Activated CD4-positive, alpha-beta memory T cell treated with anti-CD3 and anti-CD28 coated beads, Interleukin-2, amount 10 ng/mL, durations not matched to agents 7 days and 5 days (primary cell): ENCODE measurements at regions of chr5 and their contacts with region 1.

Region 1: DNA sequence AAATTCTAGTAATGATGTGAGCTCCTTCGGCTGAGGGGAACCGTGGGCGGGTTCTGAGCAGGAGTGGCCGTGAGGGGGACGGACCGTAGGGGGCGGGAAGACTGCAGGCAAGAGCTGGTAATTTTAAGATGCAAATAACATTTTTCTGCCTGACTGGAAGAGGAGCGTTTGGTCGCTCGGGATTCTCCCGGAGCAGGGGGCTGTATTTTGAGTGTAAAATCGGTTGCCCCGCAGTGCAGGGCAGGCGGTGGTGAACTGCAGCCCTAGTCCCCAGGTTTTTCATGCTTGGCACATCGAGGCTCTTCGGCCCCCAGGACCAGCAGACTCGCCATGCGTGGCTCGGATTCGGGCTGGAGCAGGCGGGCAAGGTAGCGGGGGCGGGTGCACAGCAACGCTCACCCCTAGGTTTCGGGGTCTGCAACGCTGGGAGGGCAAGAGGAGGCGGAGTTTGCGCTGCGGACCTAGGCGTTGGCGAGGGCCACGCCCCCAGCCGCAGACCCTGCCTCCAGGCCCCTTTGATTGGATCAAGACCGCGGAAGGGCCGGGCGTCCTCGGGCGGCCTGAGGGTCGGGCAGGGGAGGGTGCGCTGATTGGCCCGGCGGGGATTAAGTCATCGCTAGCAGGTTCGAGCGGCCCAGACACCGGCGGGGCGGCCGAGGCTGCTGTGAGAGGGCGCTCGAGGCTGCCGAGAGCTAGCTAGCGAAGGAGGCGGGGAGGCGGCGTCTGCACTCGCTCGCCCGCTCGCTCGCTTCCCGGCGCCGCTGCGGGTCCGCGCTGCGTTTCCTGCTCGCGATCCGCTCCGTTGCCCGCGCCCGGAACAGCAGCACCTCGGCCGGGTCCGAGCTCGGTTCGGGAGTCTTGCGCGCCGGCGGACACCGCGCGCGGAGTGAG is at the start of gene ARHGAP26:
- DNase-seq: peak; percentile 94
- H3K4me3 Mint-ChIP-seq: peak within 1 kb of the TSS; percentile 91
- H3K27ac Mint-ChIP-seq: peak within 1 kb of the TSS; percentile 72
- H3K4me1 Mint-ChIP-seq: peaks cover 33% of the 10 kb centered on the region
- H3K27me3 Mint-ChIP-seq: peaks cover 3% of the 10 kb centered on the region
- total RNA-seq, gene ARHGAP26: 14.8 to 17.1 TPM

Region 2: DNA sequence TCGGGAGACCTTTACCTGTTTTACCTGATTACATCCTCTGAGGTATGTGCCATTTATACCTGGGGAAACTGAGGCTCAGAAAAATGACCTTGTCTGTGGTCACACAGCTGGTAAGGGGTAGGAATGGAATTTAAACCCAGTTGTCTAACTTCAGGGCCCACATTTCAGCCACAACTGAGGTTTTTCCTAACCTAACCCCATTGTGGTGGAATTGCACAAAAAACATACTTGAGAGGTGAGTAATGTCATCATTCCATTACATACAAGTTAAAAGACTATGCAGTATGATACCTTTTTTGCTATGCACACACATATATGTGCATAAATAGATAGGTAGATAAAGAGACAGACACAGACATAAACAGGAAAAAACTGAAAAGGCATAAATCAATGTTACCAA is 98.2 kb before region 1 on chr5:
- CTCF ChIA-PET with region 1: no interaction called
- POLR2A ChIA-PET with region 1: no interaction called
- DNase-seq: no peak
- H3K4me3 Mint-ChIP-seq: no peak overlapping the region
- H3K27ac Mint-ChIP-seq: no peak overlapping the region
- H3K4me1 Mint-ChIP-seq: no peaks in the 10 kb centered on the region
- H3K27me3 Mint-ChIP-seq: peaks cover 3% of the 10 kb centered on the region

Region 3: GRCh38 chr5:142748568-142749249 is 21.3 kb before region 1 on chr5:
- CTCF ChIA-PET with region 1: interaction called, 38 read pairs
- POLR2A ChIA-PET with region 1: interaction called, 3 read pairs
- DNase-seq: peak; percentile 59
- H3K4me3 Mint-ChIP-seq: no peak overlapping the region
- H3K27ac Mint-ChIP-seq: no peak overlapping the region
- H3K4me1 Mint-ChIP-seq: peaks cover 14% of the 10 kb centered on the region
- H3K27me3 Mint-ChIP-seq: peaks cover 4% of the 10 kb centered on the region

Region 4: DNA sequence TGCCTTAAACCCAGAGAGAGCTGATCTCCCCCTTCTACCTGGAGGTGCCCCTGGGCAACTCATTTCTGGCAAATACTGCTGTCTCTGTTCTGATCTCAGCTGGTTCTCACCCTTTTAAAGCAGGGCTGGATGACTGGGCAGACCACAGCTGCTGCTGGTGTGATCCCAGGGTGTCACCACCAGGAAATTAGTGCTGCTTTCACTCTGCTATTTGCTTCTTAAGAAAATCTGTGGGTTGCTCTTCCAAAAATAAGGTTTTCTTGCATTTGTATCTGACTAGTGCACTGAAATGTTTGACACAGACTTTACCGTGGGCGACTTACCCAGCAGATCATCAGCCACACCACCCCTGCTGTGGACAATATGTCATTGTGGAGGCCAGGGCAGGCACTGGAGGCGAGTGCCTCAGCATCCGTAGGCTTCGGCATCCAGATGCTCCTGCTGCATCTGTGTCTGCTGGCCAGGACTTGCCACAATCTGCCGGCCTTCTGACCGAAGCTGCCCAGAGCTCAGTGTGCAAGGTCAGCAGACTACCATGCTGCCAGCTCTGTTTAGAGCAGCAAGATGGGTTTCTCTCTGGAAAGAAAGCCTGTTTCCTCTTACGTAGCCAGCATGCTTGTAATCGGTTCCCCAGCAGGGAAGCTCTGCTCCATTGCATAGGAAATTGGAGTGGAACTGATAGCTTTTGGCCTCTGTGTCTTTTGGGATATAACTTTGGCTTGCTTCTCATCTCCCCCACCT is 13.8 kb after region 1 on chr5:
- CTCF ChIA-PET with region 1: interaction called, 48 read pairs
- POLR2A ChIA-PET with region 1: interaction called, 27 read pairs
- DNase-seq: peak; percentile 74
- H3K4me3 Mint-ChIP-seq: peak overlapping the region; percentile 63
- H3K27ac Mint-ChIP-seq: peak overlapping the region; percentile 81
- H3K4me1 Mint-ChIP-seq: peaks cover 61% of the 10 kb centered on the region
- H3K27me3 Mint-ChIP-seq: no peaks in the 10 kb centered on the region

Region 5: GRCh38 chr5:142800776-142801494 is 30.9 kb after region 1 on chr5:
- CTCF ChIA-PET with region 1: interaction called, 9 read pairs
- POLR2A ChIA-PET with region 1: interaction called, 16 read pairs
- DNase-seq: peak; percentile 65
- H3K4me3 Mint-ChIP-seq: peak overlapping the region; percentile 48
- H3K27ac Mint-ChIP-seq: peak overlapping the region; percentile 77
- H3K4me1 Mint-ChIP-seq: peaks cover 60% of the 10 kb centered on the region
- H3K27me3 Mint-ChIP-seq: no peaks in the 10 kb centered on the region

Region 6: DNA sequence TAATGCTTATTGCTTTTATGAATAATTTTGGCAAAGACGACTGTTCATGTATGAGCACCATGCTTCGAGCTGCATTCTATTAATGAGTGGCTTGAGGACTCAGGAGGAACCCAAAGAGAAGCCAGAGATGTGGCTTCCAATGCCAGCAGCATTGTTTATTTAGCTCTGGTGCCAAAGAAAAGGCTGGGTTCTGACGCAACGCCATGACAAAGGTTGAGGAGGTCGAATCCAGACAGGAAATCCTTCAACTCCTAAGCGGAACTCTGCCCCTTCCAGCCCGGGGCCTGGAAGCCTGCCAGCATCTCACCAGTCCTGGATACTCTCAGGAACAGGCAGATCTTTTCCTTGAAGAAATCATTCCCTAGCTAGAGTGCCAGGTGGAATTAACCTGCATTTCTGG is 104.6 kb after region 1 on chr5:
- CTCF ChIA-PET with region 1: interaction called, 32 read pairs
- POLR2A ChIA-PET with region 1: no interaction called
- DNase-seq: no peak
- H3K4me3 Mint-ChIP-seq: no peak overlapping the region
- H3K27ac Mint-ChIP-seq: no peak overlapping the region
- H3K4me1 Mint-ChIP-seq: no peaks in the 10 kb centered on the region
- H3K27me3 Mint-ChIP-seq: no peaks in the 10 kb centered on the region

Region 7: GRCh38 chr5:142881076-142881783 is 111.2 kb after region 1 on chr5:
- CTCF ChIA-PET with region 1: interaction called, 23 read pairs
- POLR2A ChIA-PET with region 1: no interaction called
- DNase-seq: no peak
- H3K4me3 Mint-ChIP-seq: no peak overlapping the region
- H3K27ac Mint-ChIP-seq: no peak overlapping the region
- H3K4me1 Mint-ChIP-seq: peaks cover 23% of the 10 kb centered on the region
- H3K27me3 Mint-ChIP-seq: no peaks in the 10 kb centered on the region

Region 8: GRCh38 chr5:142888469-142889085 is 118.6 kb after region 1 on chr5:
- CTCF ChIA-PET with region 1: interaction called, 14 read pairs
- POLR2A ChIA-PET with region 1: interaction called, 4 read pairs
- DNase-seq: no peak
- H3K4me3 Mint-ChIP-seq: no peak overlapping the region
- H3K27ac Mint-ChIP-seq: no peak overlapping the region
- H3K4me1 Mint-ChIP-seq: peaks cover 12% of the 10 kb centered on the region
- H3K27me3 Mint-ChIP-seq: no peaks in the 10 kb centered on the region